ENCODE measurements at regions of chr17 and their contacts with region 1.

Region 1: GRCh38 chr17:66255112-66255511 is 25.9 kb upstream of the APOH start:
- DNase-seq: no peak
- ATAC-seq: peak; percentile 78

Region 2: DNA sequence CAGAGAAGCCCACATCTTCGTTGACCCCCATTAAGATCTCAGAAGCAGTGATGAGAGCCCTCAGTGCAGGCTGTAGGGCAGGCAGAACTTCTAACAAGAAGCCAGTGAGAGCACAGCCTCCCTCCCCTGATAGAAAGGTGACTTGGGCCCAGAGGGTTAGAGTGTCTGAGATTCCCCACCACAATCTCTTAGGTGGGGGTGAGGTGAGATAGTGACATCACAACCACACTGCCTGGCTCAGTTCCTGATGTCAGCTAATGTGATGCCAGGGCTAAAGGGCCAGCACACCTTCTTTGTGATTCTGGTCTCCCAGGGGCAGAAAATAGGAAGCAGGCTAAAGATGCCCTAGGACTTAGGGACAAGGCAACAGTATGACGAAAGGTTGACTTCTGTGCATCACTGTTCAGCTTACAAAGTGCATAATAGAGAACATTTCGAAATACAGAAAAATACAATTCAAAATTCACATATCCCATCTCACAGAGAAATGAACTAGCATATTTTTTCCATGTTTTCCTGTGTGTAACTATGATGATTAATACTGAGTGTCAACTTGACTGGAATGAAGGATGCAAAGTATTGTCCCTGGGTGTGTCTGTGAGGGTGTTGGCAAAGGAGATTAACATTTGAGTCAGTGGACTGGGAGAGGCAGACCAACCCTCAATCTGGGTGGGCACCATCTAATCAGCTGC is 428.7 kb before region 1 on chr17:
- intact Hi-C with region 1: no loop called
- DNase-seq: no peak
- ATAC-seq: no peak

Region 3: GRCh38 chr17:66567234-66568170 is 312.4 kb after region 1 on chr17:
- intact Hi-C with region 1: loop called (anchors 10 kb)
- DNase-seq: peak; percentile 83
- ATAC-seq: peak; percentile 79